ENCODE measurements at regions of chr12 and their contacts with region 1.

Region 1: DNA sequence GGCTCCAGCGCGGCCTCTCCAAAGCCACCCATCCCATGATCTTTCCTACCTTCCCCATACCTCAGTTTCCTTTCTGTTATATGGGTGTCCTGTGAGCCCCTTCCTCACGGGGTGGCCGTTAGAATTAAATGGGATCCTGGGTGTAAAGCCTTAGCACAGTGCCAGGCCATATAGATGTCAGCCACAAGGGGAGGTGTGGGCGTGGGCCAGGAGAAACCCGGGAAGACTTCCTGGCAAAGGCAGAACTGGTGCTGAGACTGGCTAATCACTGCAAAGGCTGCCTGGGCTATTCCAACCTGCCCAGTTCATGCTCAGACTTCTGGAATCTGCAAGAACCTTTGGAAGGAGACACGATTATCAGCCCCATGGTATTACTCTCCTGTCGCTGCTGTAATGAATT is 11.0 kb upstream of the NCOR2 start:
- DNase-seq: no peak
- H3K4me3 ChIP-seq: no peak overlapping the region
- H3K27ac ChIP-seq: no peak overlapping the region
- H3K4me1 ChIP-seq: no peaks in the 10 kb centered on the region
- H3K27me3 ChIP-seq: no peaks in the 10 kb centered on the region
- CTCF ChIP-seq: no peak
- EP300 ChIP-seq: no peak
- POLR2A ChIP-seq: no peak

Region 2: GRCh38 chr12:124538194-124539082 is 40.0 kb before region 1 on chr12:
- intact Hi-C with region 1: no loop called
- DNase-seq: peak in 4 of 5 donors; percentile 55 to 72 (median 61)
- H3K4me3 ChIP-seq: no peak overlapping the region
- H3K27ac ChIP-seq: peak overlapping the region; percentile 9 to 55
- H3K4me1 ChIP-seq: peaks cover 48% of the 10 kb centered on the region
- H3K27me3 ChIP-seq: no peaks in the 10 kb centered on the region
- CTCF ChIP-seq: no peak
- EP300 ChIP-seq: no peak
- POLR2A ChIP-seq: no peak

Region 3: GRCh38 chr12:124625867-124626675 is 47.6 kb after region 1 on chr12:
- intact Hi-C with region 1: no loop called
- DNase-seq: peak; percentile 50 to 77 (median 63)
- H3K4me3 ChIP-seq: no peak overlapping the region
- H3K27ac ChIP-seq: peak overlapping the region in 1 of 2 donors; percentile 49
- H3K4me1 ChIP-seq: peaks cover 26% of the 10 kb centered on the region
- H3K27me3 ChIP-seq: no peaks in the 10 kb centered on the region
- CTCF ChIP-seq: no peak
- EP300 ChIP-seq: no peak
- POLR2A ChIP-seq: no peak

Region 4: GRCh38 chr12:124734224-124734788 is 155.9 kb after region 1 on chr12:
- intact Hi-C with region 1: loop called in 1 of 4 experiments (anchors 10 kb)
- DNase-seq: no peak
- H3K4me3 ChIP-seq: no peak overlapping the region
- H3K27ac ChIP-seq: no peak overlapping the region
- H3K4me1 ChIP-seq: peaks cover 13% of the 10 kb centered on the region
- H3K27me3 ChIP-seq: no peaks in the 10 kb centered on the region
- CTCF ChIP-seq: no peak
- EP300 ChIP-seq: no peak
- POLR2A ChIP-seq: no peak

Measured in ovary (tissue), 10 donors.